Left colon (tissue), 2 donors: ENCODE measurements at regions of chr18 and their contacts with region 1.

Region 1: GRCh38 chr18:34122724-34123334 is 101.9 kb downstream of the NOL4 start:
- DNase-seq: peak in 1 of 2 donors; percentile 12
- ATAC-seq: peak; percentile 77

Region 2: GRCh38 chr18:33817096-33817495 is 305.7 kb before region 1 on chr18:
- intact Hi-C with region 1: no loop called
- DNase-seq: no peak
- ATAC-seq: no peak

Region 3: DNA sequence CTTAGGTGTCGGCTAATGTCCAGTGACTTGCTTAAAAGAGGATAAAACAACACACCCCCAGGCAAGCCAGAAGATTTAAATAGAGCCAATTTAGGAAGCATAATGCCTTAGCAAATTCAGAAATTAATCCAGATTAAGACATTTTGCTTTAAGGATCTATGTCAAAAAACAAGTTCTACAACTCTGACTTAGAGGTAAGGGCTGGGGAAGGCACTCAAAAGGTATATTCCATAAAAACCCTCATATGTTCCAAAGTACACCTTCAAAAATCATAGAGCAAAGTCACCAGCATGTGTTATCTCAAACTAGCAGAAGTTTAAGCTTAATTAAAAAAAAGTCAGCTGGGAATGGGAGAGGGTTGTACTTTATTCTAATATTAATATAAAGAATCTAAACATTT is 104.5 kb before region 1 on chr18:
- intact Hi-C with region 1: no loop called
- DNase-seq: no peak
- ATAC-seq: peak; percentile 94

Region 4: GRCh38 chr18:34075963-34076860 is 46.6 kb before region 1 on chr18:
- intact Hi-C with region 1: no loop called
- DNase-seq: no peak
- ATAC-seq: no peak

Region 5: GRCh38 chr18:34158881-34159690 is 36.3 kb after region 1 on chr18:
- intact Hi-C with region 1: no loop called
- DNase-seq: peak in 1 of 2 donors; percentile 4
- ATAC-seq: no peak

Region 6: DNA sequence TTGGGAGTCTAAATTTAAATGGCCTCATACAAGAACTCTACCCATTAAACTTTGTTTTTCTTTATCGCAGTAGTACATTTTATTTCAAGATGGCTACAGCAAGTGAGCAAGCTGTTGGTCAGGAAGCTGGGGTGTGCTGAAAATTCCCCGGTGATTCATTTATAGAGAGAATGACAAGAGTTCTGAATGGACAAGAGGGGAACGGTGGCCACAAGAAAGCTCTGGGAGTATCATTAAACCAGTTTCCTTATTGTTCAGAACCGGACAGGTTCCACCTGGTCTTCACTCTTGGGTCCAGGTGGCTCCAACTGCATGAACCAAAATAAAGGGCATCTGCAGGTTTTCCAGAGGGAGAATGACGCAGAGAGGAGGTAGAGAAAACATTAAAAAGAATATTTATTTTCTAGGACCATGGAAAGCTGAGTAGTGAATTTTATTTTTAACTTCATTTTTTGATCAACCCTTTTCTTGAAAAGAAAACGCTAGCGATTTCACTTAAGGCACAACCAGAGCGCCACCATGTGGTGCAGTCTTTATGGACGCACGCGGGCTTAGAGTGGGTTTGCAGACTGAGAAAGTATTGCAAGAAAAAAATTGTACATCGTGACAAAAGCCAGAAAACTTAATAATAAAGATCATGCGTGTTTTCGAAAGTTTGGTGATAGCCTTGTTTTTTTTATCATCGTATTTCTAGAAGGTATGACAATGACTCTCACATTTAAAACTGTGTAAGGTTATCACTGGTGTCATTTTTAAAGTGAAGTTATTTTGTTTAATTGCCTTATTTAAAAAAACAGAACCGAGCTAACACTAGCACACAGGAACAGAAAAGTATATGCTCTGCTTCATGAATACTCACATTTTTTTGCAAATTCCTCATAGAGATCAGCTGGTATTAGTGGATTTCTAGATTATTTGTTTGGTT is 199.8 kb after region 1 on chr18:
- intact Hi-C with region 1: loop called in 1 of 2 experiments (anchors 5 kb)
- DNase-seq: peak in 1 of 2 donors; percentile 85
- ATAC-seq: peak; percentile 71